Activated T-helper 1 cell treated with anti-CD3 and anti-CD28 coated beads, Interleukin-12 subunit alpha, Interleukin-12 subunit beta, Interleukin-2, Interleukin-4 antibody, amounts not matched to agents 30 ng/mL and 10 ng/mL and 1 ng/mL, durations not matched to agents 14 hours and 24 hours and 36 hours (primary cell): ENCODE measurements at regions of chr1 and their contacts with region 1.

Region 1: GRCh38 chr1:230426246-230427093 is at the start of gene PGBD5:
- DNase-seq: peak; percentile 59
- H3K4me3 Mint-ChIP-seq: peak within 1 kb of the TSS; percentile 78
- H3K27ac Mint-ChIP-seq: peak within 1 kb of the TSS; percentile 40
- H3K4me1 Mint-ChIP-seq: peaks cover 9% of the 10 kb centered on the region
- H3K27me3 Mint-ChIP-seq: peaks cover 53% of the 10 kb centered on the region
- total RNA-seq, gene PGBD5: not detected in 2 replicates

Region 2: DNA sequence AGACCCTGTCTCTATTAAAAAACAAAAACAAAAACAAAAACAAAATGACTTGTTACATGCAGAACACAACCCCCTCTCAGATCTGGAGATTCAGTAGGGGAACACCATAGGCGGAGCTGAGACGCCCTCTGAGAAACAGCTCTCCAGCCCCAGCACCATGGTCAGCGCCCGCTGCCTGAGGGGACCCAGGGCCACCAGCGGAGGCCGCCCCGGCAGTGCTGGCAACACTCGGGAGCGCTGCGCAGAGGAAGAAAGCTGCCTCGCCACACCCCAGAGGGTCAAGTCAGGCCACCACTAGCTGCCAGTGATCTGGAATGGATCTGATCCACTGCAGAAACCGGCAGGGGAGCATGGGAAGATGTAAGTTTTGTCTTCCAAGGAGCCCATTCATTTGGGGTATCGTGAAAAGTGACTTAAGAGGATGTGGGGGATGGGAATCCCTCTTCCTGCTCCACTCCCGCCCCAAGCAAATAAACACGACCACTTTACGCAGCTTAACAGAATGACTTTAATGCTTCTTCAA is 995.6 kb before region 1 on chr1:
- intact Hi-C with region 1: loop called (anchors 10 kb)
- DNase-seq: no peak
- H3K4me3 Mint-ChIP-seq: peak overlapping the region; percentile 64
- H3K27ac Mint-ChIP-seq: peak overlapping the region; percentile 75
- H3K4me1 Mint-ChIP-seq: peaks cover 8% of the 10 kb centered on the region
- H3K27me3 Mint-ChIP-seq: peaks cover 79% of the 10 kb centered on the region

Region 3: GRCh38 chr1:231162297-231162969 is 736.0 kb after region 1 on chr1:
- intact Hi-C with region 1: loop called (anchors 10 kb)
- DNase-seq: peak; percentile 12
- H3K4me3 Mint-ChIP-seq: no peak overlapping the region
- H3K27ac Mint-ChIP-seq: no peak overlapping the region
- H3K4me1 Mint-ChIP-seq: no peaks in the 10 kb centered on the region
- H3K27me3 Mint-ChIP-seq: peaks cover 64% of the 10 kb centered on the region